ENCODE measurements at regions of chr3 and their contacts with region 1.

Region 1: DNA sequence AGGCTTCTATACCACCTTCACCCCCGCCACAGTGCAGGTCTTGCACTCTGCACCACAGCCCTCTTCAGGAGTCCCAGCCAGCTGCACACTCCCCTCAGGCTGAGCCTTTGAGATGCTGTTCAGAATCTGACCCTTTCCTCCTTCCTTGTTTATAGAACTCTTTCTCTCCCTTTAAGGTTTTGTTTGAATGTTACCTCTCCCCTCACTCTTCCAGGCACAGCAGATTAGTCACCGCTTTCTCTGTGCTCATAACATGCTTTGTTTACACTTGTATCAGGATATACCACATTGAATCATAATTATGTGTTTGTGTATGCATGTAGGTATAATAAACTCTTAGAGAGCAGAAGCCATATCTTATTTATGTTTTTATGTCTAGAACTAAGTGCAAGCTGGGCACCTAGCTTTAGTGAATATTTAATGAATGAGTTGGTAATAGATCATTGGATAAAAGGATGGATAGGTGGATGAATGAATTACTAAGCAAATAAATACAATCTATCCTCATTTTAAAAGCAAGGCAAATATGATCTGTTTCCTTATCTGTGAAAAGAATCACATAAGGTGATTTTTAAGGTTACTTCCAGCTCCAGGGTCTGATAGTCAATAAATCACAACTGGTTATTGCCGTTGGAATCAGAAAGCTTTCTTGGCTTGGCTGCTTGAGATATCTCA is 168.5 kb upstream of the BCL6 start:
- DNase-seq: peak; percentile 64 to 100
- H3K4me3 ChIP-seq: peak overlapping the region; percentile 15; the same call in 1 of the 2 replicates
- H3K27ac ChIP-seq: peak overlapping the region; percentile 94
- H3K4me1 ChIP-seq: peaks cover 85% of the 10 kb centered on the region
- H3K27me3 ChIP-seq: no peaks in the 10 kb centered on the region
- CTCF ChIP-seq: no peak

Region 2: DNA sequence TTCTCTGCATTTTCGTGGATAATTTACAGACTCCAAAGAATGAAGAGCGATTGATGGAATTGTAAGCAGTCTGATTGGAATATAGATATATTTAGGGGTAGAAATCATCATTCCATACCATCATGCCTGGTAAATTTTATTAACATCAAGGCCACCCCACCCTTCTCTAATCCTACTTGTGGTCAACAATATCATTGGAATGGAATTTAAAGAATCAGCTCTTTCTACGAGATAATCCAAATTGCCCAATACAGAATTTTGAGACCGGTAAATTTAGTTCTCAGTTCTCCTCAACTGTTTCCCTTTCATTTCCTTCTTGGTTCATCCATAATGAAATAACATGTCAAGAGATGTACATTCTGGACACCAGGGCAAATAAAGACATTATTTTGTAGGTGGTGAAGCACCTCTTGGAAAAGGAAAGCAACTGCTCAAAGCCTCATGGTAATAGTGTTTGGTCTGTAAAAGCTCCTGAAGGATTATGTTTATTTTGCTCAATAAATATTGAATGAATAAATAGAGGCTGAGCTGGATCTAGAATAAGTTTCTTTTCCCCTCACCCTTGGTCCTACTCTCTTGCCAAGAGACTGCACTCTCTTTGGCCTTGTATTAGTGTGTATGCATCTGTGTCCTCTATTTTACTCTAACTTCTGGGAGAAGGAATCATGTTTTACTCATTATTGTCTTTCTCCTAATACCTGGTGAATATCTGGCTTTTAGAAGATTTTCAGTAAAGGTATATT is 34.8 kb before region 1 on chr3:
- CTCF ChIA-PET with region 1: no interaction called
- POLR2A ChIA-PET with region 1: no interaction called
- intact Hi-C with region 1: loop called (anchors 1 kb)
- DNase-seq: peak; percentile 19 to 96
- H3K4me3 ChIP-seq: peak overlapping the region; percentile 30; the same call in 1 of the 2 replicates
- H3K27ac ChIP-seq: peak overlapping the region; percentile 86
- H3K4me1 ChIP-seq: peaks cover 52% of the 10 kb centered on the region
- H3K27me3 ChIP-seq: no peaks in the 10 kb centered on the region
- CTCF ChIP-seq: no peak

Region 3: DNA sequence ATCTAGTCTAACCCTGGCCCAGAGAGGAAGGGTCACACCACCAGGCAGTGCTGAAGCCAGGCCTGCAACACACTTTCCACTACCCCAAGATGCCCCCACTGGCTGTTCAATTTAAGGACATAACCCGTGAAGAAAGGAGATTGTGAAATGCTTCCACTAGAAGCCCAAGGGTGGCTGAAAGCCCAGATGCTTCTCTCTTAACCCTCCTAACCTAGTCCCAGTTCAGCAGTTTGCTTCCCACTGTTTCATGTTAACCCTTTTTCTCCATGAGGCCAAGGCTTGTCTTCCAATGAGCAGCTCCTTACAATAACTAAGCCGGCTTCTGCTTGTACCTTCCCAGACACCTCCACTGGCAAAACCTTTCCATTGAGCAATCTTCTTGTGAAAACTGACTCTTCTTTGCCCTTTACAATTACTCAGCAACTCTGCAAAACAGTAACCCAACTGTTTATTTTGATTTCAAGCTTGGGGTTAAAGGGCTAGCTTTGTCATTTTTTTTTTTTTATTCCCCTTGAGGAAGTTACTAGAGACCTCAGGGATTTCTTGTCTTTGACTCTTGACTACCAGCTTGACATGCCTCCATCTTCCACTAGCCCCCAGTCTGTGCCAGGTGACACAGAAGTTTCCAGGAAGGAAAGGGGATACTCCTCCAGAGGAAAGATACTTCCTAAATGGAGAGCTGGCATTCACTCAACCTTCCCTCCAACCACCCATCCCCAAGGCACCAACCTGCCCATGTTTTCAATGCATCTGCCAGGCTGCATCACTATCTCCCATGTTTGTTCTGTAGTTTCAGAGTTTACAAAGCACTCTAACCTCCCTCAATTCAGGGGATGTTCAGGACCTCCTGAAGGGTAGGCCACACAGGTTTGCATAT is 41.6 kb after region 1 on chr3:
- CTCF ChIA-PET with region 1: no interaction called
- POLR2A ChIA-PET with region 1: no interaction called
- intact Hi-C with region 1: loop called (anchors 1 kb)
- DNase-seq: peak; percentile 53 to 98
- H3K4me3 ChIP-seq: peak overlapping the region; percentile 23
- H3K27ac ChIP-seq: peak overlapping the region; percentile 90
- H3K4me1 ChIP-seq: peaks cover 71% of the 10 kb centered on the region
- H3K27me3 ChIP-seq: no peaks in the 10 kb centered on the region
- CTCF ChIP-seq: no peak

Region 4: DNA sequence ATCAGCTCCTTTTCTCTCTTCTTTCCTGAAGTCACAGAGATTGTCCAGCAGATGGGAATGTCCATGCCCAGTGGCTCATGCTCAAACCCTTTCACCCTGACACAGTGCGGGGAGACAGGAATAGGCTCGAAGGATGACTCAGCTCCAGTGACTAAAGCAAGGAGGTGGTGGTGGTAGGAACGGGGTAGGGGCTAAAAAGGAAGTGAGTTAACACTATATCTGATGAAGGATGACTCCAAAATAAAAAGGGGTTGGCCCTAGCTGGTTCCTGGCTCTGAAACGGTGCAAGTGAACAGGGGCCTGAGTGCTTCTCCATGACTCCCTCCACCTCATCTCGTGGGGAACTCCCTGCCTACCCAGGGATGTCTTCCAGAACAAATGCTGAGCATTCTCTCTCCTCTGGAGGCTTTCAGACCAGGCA is 72.8 kb after region 1 on chr3:
- CTCF ChIA-PET with region 1: no interaction called
- POLR2A ChIA-PET with region 1: no interaction called
- intact Hi-C with region 1: loop called (anchors 2 kb)
- DNase-seq: peak; percentile 68 to 84
- H3K4me3 ChIP-seq: no peak overlapping the region
- H3K27ac ChIP-seq: peak overlapping the region; percentile 64
- H3K4me1 ChIP-seq: peaks cover 26% of the 10 kb centered on the region
- H3K27me3 ChIP-seq: no peaks in the 10 kb centered on the region
- CTCF ChIP-seq: no peak